ENCODE measurements at regions of chr1 and their contacts with region 1.

Region 1: DNA sequence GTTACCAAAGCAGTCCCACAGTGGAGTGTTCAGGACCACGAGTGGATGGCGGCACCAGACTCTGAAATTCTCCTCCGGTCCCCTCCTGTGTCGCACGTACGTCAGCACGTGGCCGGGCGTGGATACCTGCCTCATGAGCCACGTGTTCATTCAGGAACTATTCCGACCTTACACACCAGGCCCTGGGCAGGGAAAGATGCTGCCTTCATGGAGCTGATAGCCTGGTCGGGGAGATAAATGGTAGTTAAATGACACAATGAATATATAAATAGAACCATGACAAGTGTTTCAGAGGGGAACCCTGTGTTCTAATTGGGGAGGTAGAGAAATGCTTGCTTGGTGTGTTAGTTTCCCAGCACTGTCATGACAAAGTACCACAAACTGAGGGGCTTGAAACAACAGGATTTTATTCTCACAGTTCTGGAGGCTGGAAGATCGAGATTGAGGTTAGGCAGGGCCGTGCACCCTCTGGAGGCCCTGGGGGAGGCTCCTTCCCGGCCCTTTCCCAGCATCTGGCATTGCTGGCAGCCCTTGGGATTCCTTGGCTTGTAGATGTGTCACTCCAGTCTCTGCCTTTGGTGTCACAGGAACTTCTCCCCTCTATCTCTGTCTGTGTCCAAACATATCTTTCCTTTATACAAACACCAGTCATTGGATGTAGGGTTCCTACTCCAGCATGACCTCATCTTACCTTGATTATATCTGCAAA is 28.9 kb upstream of the GPR137B start:
- DNase-seq: no peak
- H3K4me3 ChIP-seq: no peak overlapping the region
- H3K27ac ChIP-seq: no peak overlapping the region
- H3K4me1 ChIP-seq: no peaks in the 10 kb centered on the region
- H3K27me3 ChIP-seq: no peaks in the 10 kb centered on the region
- CTCF ChIP-seq: no peak
- EP300 ChIP-seq: no peak
- POLR2A ChIP-seq: no peak

Region 2: DNA sequence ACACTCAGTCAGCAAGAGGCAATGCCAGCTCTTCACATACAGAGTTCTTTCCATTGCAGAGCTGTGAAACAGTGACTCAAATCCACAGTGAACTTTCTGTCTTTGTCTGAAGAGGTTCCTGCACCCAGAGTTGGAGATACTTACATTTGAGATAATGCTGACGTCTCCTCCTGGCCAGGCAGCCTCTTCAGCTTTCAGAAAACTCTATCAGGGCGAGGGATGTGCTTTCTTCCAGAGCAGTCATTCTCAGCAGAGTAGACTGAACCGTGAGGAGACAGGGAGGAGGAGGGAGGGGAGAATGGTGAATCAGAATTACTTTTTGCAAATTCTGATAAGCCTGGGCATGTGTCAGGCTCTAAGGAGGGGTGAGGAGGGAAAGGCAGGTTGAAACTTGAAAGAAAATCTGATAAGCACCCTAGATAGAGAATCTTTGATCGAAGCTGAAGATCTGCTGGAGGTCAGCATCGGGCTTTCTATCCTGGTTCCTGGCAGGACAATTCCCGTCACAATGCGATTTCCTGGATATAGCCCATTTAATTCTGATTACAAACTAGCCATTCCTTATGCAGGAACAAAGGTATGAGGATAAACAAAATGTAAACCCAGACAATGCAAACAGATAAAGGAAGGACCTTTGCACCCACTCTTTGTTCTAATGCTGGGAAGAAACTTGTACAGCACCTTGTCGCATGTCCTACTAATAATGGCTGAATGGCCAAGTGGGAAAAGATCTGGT is 29.7 kb before region 1 on chr1:
- intact Hi-C with region 1: no loop called
- DNase-seq: no peak
- H3K4me3 ChIP-seq: no peak overlapping the region
- H3K27ac ChIP-seq: peak overlapping the region in 1 of 2 donors; percentile 30
- H3K4me1 ChIP-seq: no peaks in the 10 kb centered on the region
- H3K27me3 ChIP-seq: no peaks in the 10 kb centered on the region
- CTCF ChIP-seq: no peak
- EP300 ChIP-seq: no peak
- POLR2A ChIP-seq: no peak

Region 3: GRCh38 chr1:237562242-237562823 is 1448.9 kb after region 1 on chr1:
- intact Hi-C with region 1: loop called in 1 of 4 experiments (anchors 10 kb)
- DNase-seq: no peak
- H3K4me3 ChIP-seq: no peak overlapping the region
- H3K27ac ChIP-seq: no peak overlapping the region
- H3K4me1 ChIP-seq: no peaks in the 10 kb centered on the region
- H3K27me3 ChIP-seq: no peaks in the 10 kb centered on the region
- CTCF ChIP-seq: peak; percentile 9 to 46 (median 17)
- EP300 ChIP-seq: no peak
- POLR2A ChIP-seq: no peak

Measured in ovary (tissue), 10 donors.